ENCODE measurements at regions of chr12 and their contacts with region 1.

Region 1: DNA sequence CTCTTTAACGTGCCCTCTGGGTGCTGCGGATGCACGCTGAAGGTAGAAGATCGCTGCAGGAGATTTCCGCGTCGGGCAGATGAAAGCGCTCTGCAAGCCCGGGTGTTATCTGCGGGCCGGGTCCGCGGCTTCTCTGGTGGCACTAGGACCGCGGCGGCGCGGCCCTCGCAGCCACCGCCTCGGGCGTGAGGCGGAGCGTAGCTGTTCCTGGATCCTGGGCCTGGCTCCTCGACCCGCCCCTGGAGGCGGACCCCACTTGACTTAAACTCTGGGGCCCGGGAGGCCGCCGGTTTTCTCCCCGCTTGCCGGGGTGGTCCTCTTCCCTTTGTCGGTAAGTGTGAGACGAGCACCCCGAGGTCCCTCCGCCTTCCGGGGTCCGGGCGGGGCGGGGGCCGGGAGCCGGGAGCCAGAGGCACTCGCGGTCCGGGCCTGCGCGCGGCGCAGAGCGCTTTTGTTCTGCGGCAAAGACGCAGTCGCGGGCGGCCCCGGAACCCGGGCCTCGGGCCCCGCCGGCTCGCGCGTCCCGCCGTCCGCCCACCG is at the start of gene RESF1:
- DNase-seq: peak; percentile 89
- ATAC-seq: peak; percentile 98 to 99 (median 98)
- H3K4me3 ChIP-seq: peak within 1 kb of the TSS; percentile 47 to 86 (median 72)
- H3K27ac ChIP-seq: peak within 1 kb of the TSS; percentile 84 to 99 (median 96)
- H3K4me1 ChIP-seq: peaks cover 3 to 46% (median 38%) of the 10 kb centered on the region in 9 donors
- H3K27me3 ChIP-seq: no peaks in the 10 kb centered on the region
- CTCF ChIP-seq: no peak
- total RNA-seq, gene RESF1: 15.0 to 36.3 (median 19.3) TPM

Region 2: DNA sequence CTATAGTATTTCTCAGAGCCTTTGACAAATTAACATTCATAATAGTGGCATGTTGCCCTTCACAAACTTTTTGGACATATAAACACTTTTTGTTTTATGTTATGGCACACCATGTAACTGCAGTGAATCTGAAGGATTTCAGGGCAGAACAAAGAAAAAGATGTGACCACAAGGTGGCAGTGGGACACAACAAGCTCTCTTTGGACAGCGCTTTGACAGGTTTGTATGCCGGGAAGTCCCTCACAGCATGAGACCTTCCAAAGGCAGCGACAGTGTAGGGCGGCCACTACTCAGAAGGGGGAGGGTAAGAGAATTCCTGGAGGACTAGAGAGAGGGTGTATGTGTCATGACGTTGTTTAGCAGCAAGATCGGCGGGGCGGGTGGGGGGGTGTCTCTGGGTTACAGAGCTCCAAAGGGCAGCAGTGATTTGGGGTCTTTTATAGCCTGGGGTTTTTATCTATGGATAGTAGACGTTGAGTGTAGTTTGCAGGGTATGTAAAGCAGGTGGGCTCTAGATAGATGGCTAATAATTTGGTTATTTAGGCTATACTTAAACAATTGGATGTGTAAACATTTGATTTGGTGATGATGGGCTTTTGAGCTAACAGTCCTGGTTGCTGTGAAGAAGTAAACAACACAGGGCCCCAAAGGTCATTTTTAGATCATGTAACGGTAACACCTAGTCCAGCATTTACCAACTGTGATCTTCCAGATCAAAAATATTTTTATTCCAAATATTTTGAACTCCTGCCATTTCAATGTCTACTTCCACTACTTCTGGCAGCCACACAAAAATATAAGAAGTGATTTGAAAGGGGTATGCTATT is 276.9 kb before region 1 on chr12:
- intact Hi-C with region 1: loop called in 2 of 10 experiments (anchors 10 kb)
- DNase-seq: peak; percentile 17 to 50
- ATAC-seq: peak; percentile 64 to 89 (median 78)
- H3K4me3 ChIP-seq: no peak overlapping the region
- H3K27ac ChIP-seq: peak overlapping the region in 1 of 10 donors; percentile 16
- H3K4me1 ChIP-seq: peaks cover 0 to 10% (median 0%) of the 10 kb centered on the region in 9 donors
- H3K27me3 ChIP-seq: no peaks in the 10 kb centered on the region
- CTCF ChIP-seq: peak; percentile 22 to 82 (median 65)

Region 3: GRCh38 chr12:31749024-31749704 is 210.1 kb before region 1 on chr12:
- intact Hi-C with region 1: loop called in 1 of 10 experiments (anchors 10 kb)
- DNase-seq: peak in 1 of 2 donors; percentile 59
- ATAC-seq: peak; percentile 61 to 93 (median 86)
- H3K4me3 ChIP-seq: no peak overlapping the region
- H3K27ac ChIP-seq: peak overlapping the region in 9 of 10 donors; percentile 23 to 88 (median 58)
- H3K4me1 ChIP-seq: peaks cover 0 to 86% (median 9%) of the 10 kb centered on the region in 9 donors
- H3K27me3 ChIP-seq: no peaks in the 10 kb centered on the region
- CTCF ChIP-seq: no peak

Region 4: GRCh38 chr12:31868965-31869364 is 90.3 kb before region 1 on chr12:
- intact Hi-C with region 1: loop called in 1 of 10 experiments (anchors 10 kb)
- DNase-seq: peak; percentile 36 to 69
- ATAC-seq: peak in 6 of 8 donors; percentile 45 to 75 (median 64)
- H3K4me3 ChIP-seq: no peak overlapping the region
- H3K27ac ChIP-seq: no peak overlapping the region
- H3K4me1 ChIP-seq: peaks cover 0 to 6% (median 2%) of the 10 kb centered on the region in 9 donors
- H3K27me3 ChIP-seq: no peaks in the 10 kb centered on the region
- CTCF ChIP-seq: no peak

Region 5: GRCh38 chr12:31896514-31897039 is 62.7 kb before region 1 on chr12:
- intact Hi-C with region 1: loop called in 1 of 10 experiments (anchors 5 kb)
- DNase-seq: peak in 1 of 2 donors; percentile 38
- ATAC-seq: peak; percentile 28 to 85 (median 70)
- H3K4me3 ChIP-seq: no peak overlapping the region
- H3K27ac ChIP-seq: peak overlapping the region in 7 of 10 donors; percentile 13 to 92 (median 34)
- H3K4me1 ChIP-seq: peaks cover 2 to 55% (median 11%) of the 10 kb centered on the region in 9 donors
- H3K27me3 ChIP-seq: no peaks in the 10 kb centered on the region
- CTCF ChIP-seq: no peak